CD4-positive, alpha-beta T cell (primary cell): ENCODE measurements at regions of chr1 and their contacts with region 1.

Region 1: DNA sequence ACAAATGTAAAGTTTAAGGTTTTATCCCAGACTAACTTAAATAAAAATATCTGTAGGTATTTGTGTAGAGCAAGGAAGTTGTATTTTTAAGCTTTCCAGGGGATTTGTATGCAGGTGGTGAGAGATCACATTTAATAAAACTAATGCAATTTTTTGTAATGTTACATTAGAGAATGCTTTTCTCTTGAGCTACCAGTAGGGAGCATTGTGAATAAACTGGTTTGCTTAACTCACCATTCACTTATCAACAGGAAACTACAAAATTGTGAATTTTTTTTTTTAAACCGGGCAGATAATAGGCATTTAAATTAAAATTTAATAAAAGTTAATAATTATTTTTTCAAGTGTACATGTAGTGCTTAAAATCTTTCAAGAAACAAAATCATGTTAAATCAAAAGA is 78.6 kb downstream of the IVNS1ABP start:
- DNase-seq: peak in 3 of 14 experiments; percentile 48 to 59 (median 52)
- ATAC-seq: peak; percentile 79
- H3K4me3 ChIP-seq: no peak overlapping the region
- H3K4me3 Mint-ChIP-seq: peak overlapping the region; percentile 7
- H3K27ac ChIP-seq: no peak overlapping the region
- H3K27ac Mint-ChIP-seq: no peak overlapping the region
- H3K4me1 ChIP-seq: no peaks in the 10 kb centered on the region
- H3K4me1 Mint-ChIP-seq: peaks cover 30% of the 10 kb centered on the region
- H3K27me3 ChIP-seq: no peaks in the 10 kb centered on the region
- H3K27me3 Mint-ChIP-seq: no peaks in the 10 kb centered on the region
- CTCF ChIP-seq: peak; percentile 84

Region 2: DNA sequence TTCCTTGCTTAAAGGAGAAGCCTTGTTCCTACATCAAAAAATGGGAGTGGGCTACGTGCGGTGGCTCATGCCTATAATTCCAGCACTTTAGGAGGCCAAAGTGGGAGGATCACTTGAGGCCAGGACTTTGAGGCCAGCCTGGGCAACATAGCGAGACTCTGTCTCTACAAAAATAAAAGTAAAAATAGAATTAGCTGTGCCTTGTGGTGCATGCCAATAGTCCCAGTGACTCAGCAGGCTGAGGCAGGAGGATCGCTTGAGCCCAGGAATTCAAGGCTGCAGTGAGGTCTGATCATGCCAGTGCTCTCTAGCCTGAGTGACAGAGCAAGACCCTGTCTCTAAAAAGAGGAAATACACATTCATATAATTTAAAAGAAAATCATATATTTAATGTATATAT is 724.5 kb before region 1 on chr1:
- CTCF ChIA-PET with region 1: no interaction called
- POLR2A ChIA-PET with region 1: no interaction called
- intact Hi-C with region 1: no loop called
- DNase-seq: no peak
- ATAC-seq: no peak
- H3K4me3 ChIP-seq: no peak overlapping the region
- H3K4me3 Mint-ChIP-seq: no peak overlapping the region
- H3K27ac ChIP-seq: no peak overlapping the region
- H3K27ac Mint-ChIP-seq: no peak overlapping the region
- H3K4me1 ChIP-seq: no peaks in the 10 kb centered on the region
- H3K4me1 Mint-ChIP-seq: no peaks in the 10 kb centered on the region
- H3K27me3 ChIP-seq: no peaks in the 10 kb centered on the region
- H3K27me3 Mint-ChIP-seq: peaks cover 5% of the 10 kb centered on the region
- CTCF ChIP-seq: no peak

Region 3: GRCh38 chr1:185281245-185281644 is 42.8 kb after region 1 on chr1:
- CTCF ChIA-PET with region 1: interaction called, 4 read pairs
- POLR2A ChIA-PET with region 1: interaction called, 31 read pairs
- intact Hi-C with region 1: loop called in 1 of 2 experiments (anchors 5 kb)
- DNase-seq: peak in 13 of 14 experiments; percentile 10 to 78 (median 25)
- ATAC-seq: peak; percentile 96
- H3K4me3 ChIP-seq: no peak overlapping the region
- H3K4me3 Mint-ChIP-seq: peak overlapping the region; percentile 83
- H3K27ac ChIP-seq: peak overlapping the region; percentile 58 to 62
- H3K27ac Mint-ChIP-seq: peak overlapping the region; percentile 91
- H3K4me1 ChIP-seq: peaks cover 45% of the 10 kb centered on the region
- H3K4me1 Mint-ChIP-seq: peaks cover 67% of the 10 kb centered on the region
- H3K27me3 ChIP-seq: no peaks in the 10 kb centered on the region
- H3K27me3 Mint-ChIP-seq: no peaks in the 10 kb centered on the region
- CTCF ChIP-seq: no peak

Region 4: DNA sequence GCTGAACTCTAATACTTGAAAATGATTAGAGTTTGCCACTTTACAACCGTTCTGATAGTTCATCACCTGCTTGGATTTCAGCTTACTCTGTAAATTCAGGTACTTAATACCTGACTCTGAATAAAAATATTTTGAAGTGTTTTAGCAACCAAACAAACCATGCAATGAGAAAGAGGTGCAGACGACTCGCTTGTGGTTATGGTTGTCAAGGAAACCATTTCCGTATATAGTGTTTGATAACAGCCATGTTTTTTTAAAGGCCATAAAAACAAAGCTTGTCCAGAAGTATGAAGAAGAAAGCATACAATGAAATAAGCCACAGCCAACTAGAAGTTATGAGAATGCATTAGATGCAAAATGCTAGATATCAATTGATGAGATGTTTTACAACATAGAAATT is 328.5 kb after region 1 on chr1:
- CTCF ChIA-PET with region 1: interaction called, 3 read pairs
- POLR2A ChIA-PET with region 1: interaction called, 11 read pairs
- intact Hi-C with region 1: no loop called
- DNase-seq: peak in 12 of 14 experiments; percentile 15 to 95 (median 38)
- ATAC-seq: peak; percentile 81
- H3K4me3 ChIP-seq: no peak overlapping the region
- H3K4me3 Mint-ChIP-seq: peak overlapping the region; percentile 74
- H3K27ac ChIP-seq: peak overlapping the region; percentile 88 to 91
- H3K27ac Mint-ChIP-seq: peak overlapping the region; percentile 94
- H3K4me1 ChIP-seq: peaks cover 40% of the 10 kb centered on the region
- H3K4me1 Mint-ChIP-seq: peaks cover 92% of the 10 kb centered on the region
- H3K27me3 ChIP-seq: no peaks in the 10 kb centered on the region
- H3K27me3 Mint-ChIP-seq: no peaks in the 10 kb centered on the region
- CTCF ChIP-seq: no peak

Region 5: GRCh38 chr1:185595835-185596667 is 357.6 kb after region 1 on chr1:
- CTCF ChIA-PET with region 1: interaction called, 9 read pairs
- POLR2A ChIA-PET with region 1: interaction called, 5 read pairs
- intact Hi-C with region 1: loop called in 1 of 2 experiments (anchors 5 kb)
- DNase-seq: peak; percentile 33 to 77 (median 44)
- ATAC-seq: peak; percentile 80
- H3K4me3 ChIP-seq: no peak overlapping the region
- H3K4me3 Mint-ChIP-seq: no peak overlapping the region
- H3K27ac ChIP-seq: no peak overlapping the region
- H3K27ac Mint-ChIP-seq: no peak overlapping the region
- H3K4me1 ChIP-seq: peaks cover 7% of the 10 kb centered on the region
- H3K4me1 Mint-ChIP-seq: peaks cover 18% of the 10 kb centered on the region
- H3K27me3 ChIP-seq: no peaks in the 10 kb centered on the region
- H3K27me3 Mint-ChIP-seq: no peaks in the 10 kb centered on the region
- CTCF ChIP-seq: peak; percentile 48

Region 6: DNA sequence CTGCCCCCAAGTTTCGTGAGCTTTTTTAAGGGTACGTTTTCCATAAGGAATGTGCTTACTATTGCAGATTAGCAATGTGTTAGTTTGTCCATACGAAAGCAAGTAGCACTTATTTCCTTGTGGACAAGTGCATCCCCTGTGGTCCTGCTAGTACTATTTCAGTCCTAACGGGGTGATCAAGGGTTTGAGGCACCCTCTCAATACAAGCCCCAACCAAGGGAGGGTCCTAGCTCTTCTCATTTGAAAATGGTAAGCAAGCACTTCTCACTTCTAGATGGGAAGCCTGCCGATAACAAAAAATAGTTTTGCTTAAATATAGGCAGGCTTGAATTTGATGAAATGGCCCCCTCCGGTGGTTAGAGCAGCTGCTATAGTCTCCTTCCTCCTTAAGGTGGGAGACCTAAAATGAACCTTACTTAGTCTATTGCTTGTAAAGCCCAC is 431.8 kb after region 1 on chr1:
- CTCF ChIA-PET with region 1: interaction called, 6 read pairs
- POLR2A ChIA-PET with region 1: interaction called, 8 read pairs
- intact Hi-C with region 1: loop called in 1 of 2 experiments (anchors 1 kb)
- DNase-seq: peak; percentile 40 to 78 (median 54)
- ATAC-seq: peak; percentile 77
- H3K4me3 ChIP-seq: no peak overlapping the region
- H3K4me3 Mint-ChIP-seq: no peak overlapping the region
- H3K27ac ChIP-seq: no peak overlapping the region
- H3K27ac Mint-ChIP-seq: peak overlapping the region; percentile 55
- H3K4me1 ChIP-seq: peaks cover 14% of the 10 kb centered on the region
- H3K4me1 Mint-ChIP-seq: peaks cover 47% of the 10 kb centered on the region
- H3K27me3 ChIP-seq: no peaks in the 10 kb centered on the region
- H3K27me3 Mint-ChIP-seq: no peaks in the 10 kb centered on the region
- CTCF ChIP-seq: peak; percentile 71

Region 7: GRCh38 chr1:185681034-185681633 is 442.7 kb after region 1 on chr1:
- CTCF ChIA-PET with region 1: interaction called, 6 read pairs
- POLR2A ChIA-PET with region 1: interaction called, 17 read pairs
- intact Hi-C with region 1: loop called in 1 of 2 experiments (anchors 5 kb)
- DNase-seq: peak in 5 of 14 experiments; percentile 6 to 74 (median 58)
- ATAC-seq: peak; percentile 62
- H3K4me3 ChIP-seq: no peak overlapping the region
- H3K4me3 Mint-ChIP-seq: no peak overlapping the region
- H3K27ac ChIP-seq: no peak overlapping the region
- H3K27ac Mint-ChIP-seq: no peak overlapping the region
- H3K4me1 ChIP-seq: peaks cover 9% of the 10 kb centered on the region
- H3K4me1 Mint-ChIP-seq: peaks cover 33% of the 10 kb centered on the region
- H3K27me3 ChIP-seq: no peaks in the 10 kb centered on the region
- H3K27me3 Mint-ChIP-seq: no peaks in the 10 kb centered on the region
- CTCF ChIP-seq: peak; percentile 73

Region 8: DNA sequence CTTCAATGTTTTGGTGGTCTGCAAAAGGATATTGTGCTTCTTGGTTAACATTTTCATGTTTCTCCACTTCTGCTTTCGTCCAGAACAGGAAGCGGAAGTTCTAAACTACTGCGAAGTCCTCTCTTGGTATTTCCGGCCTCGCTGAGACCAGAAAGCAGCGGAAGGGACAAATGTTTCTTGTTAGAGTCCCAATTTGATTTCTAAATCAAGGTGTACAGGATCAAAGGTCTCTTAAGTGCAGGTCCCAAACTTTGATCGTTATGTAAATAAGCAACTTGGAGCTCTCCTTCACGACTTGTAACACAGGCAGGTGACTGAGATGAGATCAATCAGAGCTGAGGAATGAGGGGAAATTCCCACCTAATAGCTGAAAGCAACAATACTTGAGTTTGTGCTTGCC is 455.6 kb after region 1 on chr1:
- CTCF ChIA-PET with region 1: interaction called, 3 read pairs
- POLR2A ChIA-PET with region 1: no interaction called
- intact Hi-C with region 1: loop called in 1 of 2 experiments (anchors 2 kb)
- DNase-seq: peak in 5 of 14 experiments; percentile 6 to 64 (median 63)
- ATAC-seq: peak; percentile 44
- H3K4me3 ChIP-seq: peak overlapping the region; percentile 46
- H3K4me3 Mint-ChIP-seq: peak overlapping the region; percentile 78
- H3K27ac ChIP-seq: peak overlapping the region; percentile 45 to 66
- H3K27ac Mint-ChIP-seq: peak overlapping the region; percentile 84
- H3K4me1 ChIP-seq: peaks cover 9% of the 10 kb centered on the region
- H3K4me1 Mint-ChIP-seq: peaks cover 23% of the 10 kb centered on the region
- H3K27me3 ChIP-seq: no peaks in the 10 kb centered on the region
- H3K27me3 Mint-ChIP-seq: peaks cover 5% of the 10 kb centered on the region
- CTCF ChIP-seq: no peak